ENCODE measurements at regions of chr10 and their contacts with region 1.

Region 1: GRCh38 chr10:10869592-10869991 is 148.1 kb upstream of the CELF2 start:
- DNase-seq: no peak
- ATAC-seq: no peak
- H3K4me3 ChIP-seq: no peak overlapping the region
- H3K27ac ChIP-seq: no peak overlapping the region
- H3K4me1 ChIP-seq: no peaks in the 10 kb centered on the region
- H3K27me3 ChIP-seq: no peaks in the 10 kb centered on the region
- CTCF ChIP-seq: no peak

Region 2: GRCh38 chr10:10516346-10517130 is 353.1 kb before region 1 on chr10:
- CTCF ChIA-PET with region 1: no interaction called
- POLR2A ChIA-PET with region 1: interaction called, 11 read pairs
- in situ Hi-C with region 1: no loop called
- intact Hi-C with region 1: no loop called
- DNase-seq: no peak
- ATAC-seq: no peak
- H3K4me3 ChIP-seq: no peak overlapping the region
- H3K27ac ChIP-seq: no peak overlapping the region
- H3K4me1 ChIP-seq: no peaks in the 10 kb centered on the region
- H3K27me3 ChIP-seq: no peaks in the 10 kb centered on the region
- CTCF ChIP-seq: no peak